Common myeloid progenitor, CD34-positive (primary cell): ENCODE measurements at regions of chr3 and their contacts with region 1.

Region 1: DNA sequence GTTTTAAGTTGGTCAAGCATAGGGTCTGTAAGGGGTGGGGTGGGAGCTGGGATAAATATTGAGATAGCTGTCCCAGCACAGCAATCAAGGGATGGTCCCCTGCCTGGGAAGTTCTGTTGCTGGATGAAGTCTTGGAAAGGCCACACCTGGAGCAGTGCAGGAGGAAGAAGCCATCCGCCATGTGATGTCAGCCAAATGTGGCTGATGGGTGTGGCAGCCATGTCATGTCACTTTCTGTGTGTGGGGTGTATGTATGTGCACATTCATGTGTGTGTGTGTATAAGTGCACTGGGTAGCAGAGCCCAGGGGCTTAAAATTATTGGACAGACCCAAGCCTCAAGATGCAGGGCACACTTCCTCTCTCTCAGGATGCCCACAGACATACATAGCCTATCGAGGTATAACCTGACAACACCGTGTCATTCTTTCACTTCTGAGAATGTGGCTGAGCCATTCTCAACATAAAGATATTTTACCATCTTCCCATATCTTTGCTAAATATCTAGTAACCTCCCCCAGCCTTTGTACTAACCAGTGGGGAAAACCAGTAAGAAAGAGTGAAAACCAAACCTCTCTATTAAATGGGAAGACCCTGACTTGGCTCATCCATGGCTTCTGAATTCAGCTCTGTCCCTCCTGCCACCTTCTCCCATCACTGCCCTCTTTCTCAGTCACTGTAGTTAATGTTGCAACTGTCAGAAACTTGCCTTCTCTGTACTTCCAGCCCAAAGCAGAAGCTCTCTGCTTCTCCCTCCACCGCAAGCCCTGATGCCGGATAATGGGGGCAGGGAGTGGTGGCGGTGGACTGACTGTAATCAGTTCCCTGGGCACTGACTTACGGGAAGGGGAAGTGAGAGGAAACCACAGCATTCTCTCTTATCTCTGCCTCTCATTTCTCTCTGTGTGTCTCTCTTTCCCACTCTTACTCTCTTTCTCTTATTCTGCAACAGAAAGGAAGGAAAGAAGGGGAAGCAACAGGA is 11.2 kb downstream of the TNFSF10 start:
- DNase-seq: peak; percentile 84 to 94 (median 93)
- H3K4me3 ChIP-seq: peak overlapping the region in 5 of 7 experiments; percentile 3 to 42 (median 33)
- H3K27ac ChIP-seq: peak overlapping the region; percentile 5 to 40
- H3K4me1 ChIP-seq: peaks cover 29 to 65% (median 52%) of the 10 kb centered on the region in 4 experiments
- H3K27me3 ChIP-seq: no peaks in the 10 kb centered on the region

Region 2: DNA sequence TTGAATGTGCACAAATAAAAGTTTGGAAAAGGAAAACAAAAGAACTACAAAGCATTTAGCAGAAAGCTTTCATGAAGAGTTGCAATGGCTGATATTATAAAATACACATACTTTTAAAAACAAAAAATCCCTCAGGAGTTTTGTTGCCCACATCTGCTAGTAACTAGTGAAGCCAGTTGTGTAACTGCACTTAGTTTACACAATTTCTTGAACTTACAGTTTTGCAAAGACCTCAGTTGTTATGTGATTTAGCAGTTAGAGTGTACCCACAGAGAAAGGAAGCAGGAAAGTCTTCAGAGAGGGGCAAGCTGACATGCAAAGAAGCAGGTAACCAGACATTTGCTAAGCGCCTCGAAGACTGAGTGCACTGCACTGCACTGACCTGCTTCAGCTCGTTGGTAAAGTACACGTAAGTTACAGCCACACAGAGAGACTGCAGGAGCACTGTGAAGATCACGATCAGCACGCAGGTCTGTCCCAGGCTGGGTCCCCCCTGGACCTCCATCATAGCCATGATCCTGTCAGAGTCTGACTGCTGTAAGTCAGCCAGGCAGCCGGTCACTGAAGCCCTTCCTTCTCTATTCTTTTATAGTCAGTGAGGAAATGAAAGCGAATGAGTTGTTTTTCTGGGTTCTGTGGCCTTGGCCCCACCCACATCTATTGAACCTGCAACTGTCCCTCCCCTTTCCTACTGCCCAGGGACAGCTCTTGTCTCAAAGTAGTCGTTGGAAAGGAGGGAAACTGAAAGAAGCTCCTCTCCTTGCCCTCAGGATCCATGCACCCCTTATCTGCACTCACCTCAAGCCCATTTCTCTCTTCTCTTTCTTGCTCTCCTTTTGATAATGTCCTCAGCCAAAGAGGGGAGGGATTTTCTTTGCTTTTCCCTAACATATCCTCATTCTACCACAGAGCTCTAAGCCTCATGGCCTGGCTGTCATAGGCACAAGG is 11.1 kb after region 1 on chr3 and contains the start of gene TNFSF10:
- CTCF ChIA-PET with region 1: interaction called, 11 read pairs
- POLR2A ChIA-PET with region 1: no interaction called
- DNase-seq: peak; percentile 66 to 87 (median 86)
- H3K4me3 ChIP-seq: peak within 1 kb of the TSS; percentile 74 to 97 (median 79)
- H3K27ac ChIP-seq: peak within 1 kb of the TSS; percentile 53 to 81
- H3K4me1 ChIP-seq: peaks cover 9 to 54% (median 25%) of the 10 kb centered on the region in 4 experiments
- H3K27me3 ChIP-seq: no peaks in the 10 kb centered on the region

Region 3: DNA sequence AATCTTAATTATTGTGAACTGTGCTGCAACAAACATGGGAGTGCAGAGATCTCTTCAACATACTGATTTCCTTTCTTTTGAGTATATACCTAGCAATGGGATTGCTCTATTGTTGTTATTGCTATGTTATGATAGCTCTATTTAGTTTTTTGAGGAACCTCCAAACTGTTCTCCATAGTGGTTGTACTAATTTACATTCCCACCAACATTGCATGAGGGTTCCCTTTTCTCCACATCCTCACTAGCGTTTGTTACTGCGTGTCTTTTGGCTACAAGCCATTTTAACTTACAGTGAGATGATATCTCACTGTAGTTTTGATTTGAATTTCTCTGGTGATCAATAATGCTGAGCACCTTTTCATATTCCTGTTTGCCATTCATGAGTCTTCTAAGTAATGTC is 56.6 kb after region 1 on chr3:
- CTCF ChIA-PET with region 1: no interaction called
- POLR2A ChIA-PET with region 1: no interaction called
- DNase-seq: peak in 2 of 3 donors; percentile 55 to 58
- H3K4me3 ChIP-seq: no peak overlapping the region
- H3K27ac ChIP-seq: no peak overlapping the region
- H3K4me1 ChIP-seq: peaks cover 1 to 20% (median 6%) of the 10 kb centered on the region in 4 experiments
- H3K27me3 ChIP-seq: no peaks in the 10 kb centered on the region

Region 4: DNA sequence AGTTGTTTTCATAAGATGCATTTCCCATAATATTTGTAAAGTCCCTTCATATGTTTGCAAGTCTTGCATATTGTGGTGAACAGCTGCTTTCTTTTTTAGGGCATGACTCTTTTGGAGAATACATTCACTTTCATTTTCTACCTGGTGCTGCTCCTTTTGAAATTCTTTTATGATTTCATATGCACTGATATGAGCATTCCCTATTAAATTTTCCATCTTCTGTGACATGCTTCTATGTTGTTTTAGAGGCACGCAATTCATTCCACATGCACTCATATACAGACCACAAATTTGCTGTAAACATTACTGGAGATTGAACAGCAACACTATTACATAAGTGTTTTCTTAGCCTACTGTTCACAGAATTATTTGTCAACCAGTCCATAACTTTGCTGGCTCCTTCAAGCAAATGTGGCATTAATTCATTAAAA is 104.0 kb after region 1 on chr3:
- CTCF ChIA-PET with region 1: no interaction called
- POLR2A ChIA-PET with region 1: no interaction called
- DNase-seq: peak in 2 of 3 donors; percentile 48
- H3K4me3 ChIP-seq: peak overlapping the region in 1 of 7 experiments; percentile 28
- H3K27ac ChIP-seq: no peak overlapping the region
- H3K4me1 ChIP-seq: peaks cover 0 to 7% (median 4%) of the 10 kb centered on the region in 4 experiments
- H3K27me3 ChIP-seq: no peaks in the 10 kb centered on the region